ENCODE measurements at regions of chr10 and their contacts with region 1.

Region 1: GRCh38 chr10:132836832-132837540 is 51.0 kb upstream of the NKX6-2 start:
- DNase-seq: peak in 1 of 2 experiments; percentile 53
- H3K4me3 ChIP-seq: no peak overlapping the region
- H3K4me3 Mint-ChIP-seq: no peak overlapping the region
- H3K27ac Mint-ChIP-seq: no peak overlapping the region
- H3K4me1 ChIP-seq: no peaks in the 10 kb centered on the region
- H3K4me1 Mint-ChIP-seq: no peaks in the 10 kb centered on the region
- H3K27me3 ChIP-seq: no peaks in the 10 kb centered on the region; the same call in 1 of the 2 replicates
- H3K27me3 Mint-ChIP-seq: peaks cover 7% of the 10 kb centered on the region
- CTCF ChIP-seq: peak; percentile 92 to 96

Region 2: DNA sequence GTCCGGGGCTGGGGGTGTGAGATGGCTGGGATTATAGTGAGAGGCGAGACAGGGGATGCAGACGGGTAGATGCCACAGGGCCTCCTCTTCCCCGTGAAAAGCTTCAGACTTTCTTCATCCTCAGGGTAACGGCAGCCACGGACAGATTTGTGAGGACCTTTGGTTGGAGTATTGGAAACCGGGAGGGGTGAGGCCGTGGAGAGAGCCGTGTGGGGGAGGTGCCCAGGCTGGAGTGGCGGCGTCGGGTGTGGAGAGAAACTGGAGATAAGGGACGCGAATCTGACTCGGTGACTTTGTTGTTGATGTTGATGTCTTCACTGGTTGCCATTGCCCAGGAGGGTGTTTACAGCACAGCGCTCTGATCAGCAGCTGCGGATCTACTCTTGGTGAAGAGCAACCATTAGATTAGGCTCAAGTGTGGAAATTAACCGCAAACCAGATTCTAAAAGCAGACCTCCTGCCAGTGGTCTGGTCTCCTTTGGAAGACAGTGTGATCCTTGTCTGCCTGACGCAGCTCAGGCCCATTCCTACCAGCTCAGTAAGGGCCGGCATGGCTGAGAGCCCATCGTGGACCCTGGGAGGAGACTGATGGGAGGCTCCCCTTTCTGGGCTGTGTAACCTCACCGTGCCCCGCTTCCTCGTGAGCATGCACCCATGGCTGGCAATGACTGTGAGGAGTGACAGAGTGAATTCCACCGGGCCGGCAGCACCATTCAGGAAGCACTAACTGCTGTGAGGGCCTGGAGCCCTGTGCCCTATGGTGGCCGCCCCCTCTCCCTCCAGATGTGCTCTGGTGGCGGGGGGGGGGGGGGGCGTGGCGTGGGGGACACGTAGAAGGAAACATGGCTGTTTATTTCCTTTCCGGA is 209.1 kb before region 1 on chr10:
- CTCF ChIA-PET with region 1: no interaction called
- POLR2A ChIA-PET with region 1: no interaction called
- intact Hi-C with region 1: no loop called
- DNase-seq: peak in 1 of 2 experiments; percentile 30
- H3K4me3 ChIP-seq: no peak overlapping the region
- H3K4me3 Mint-ChIP-seq: no peak overlapping the region
- H3K27ac Mint-ChIP-seq: no peak overlapping the region
- H3K4me1 ChIP-seq: no peaks in the 10 kb centered on the region
- H3K4me1 Mint-ChIP-seq: no peaks in the 10 kb centered on the region
- H3K27me3 ChIP-seq: no peaks in the 10 kb centered on the region
- H3K27me3 Mint-ChIP-seq: no peaks in the 10 kb centered on the region
- CTCF ChIP-seq: no peak

Region 3: DNA sequence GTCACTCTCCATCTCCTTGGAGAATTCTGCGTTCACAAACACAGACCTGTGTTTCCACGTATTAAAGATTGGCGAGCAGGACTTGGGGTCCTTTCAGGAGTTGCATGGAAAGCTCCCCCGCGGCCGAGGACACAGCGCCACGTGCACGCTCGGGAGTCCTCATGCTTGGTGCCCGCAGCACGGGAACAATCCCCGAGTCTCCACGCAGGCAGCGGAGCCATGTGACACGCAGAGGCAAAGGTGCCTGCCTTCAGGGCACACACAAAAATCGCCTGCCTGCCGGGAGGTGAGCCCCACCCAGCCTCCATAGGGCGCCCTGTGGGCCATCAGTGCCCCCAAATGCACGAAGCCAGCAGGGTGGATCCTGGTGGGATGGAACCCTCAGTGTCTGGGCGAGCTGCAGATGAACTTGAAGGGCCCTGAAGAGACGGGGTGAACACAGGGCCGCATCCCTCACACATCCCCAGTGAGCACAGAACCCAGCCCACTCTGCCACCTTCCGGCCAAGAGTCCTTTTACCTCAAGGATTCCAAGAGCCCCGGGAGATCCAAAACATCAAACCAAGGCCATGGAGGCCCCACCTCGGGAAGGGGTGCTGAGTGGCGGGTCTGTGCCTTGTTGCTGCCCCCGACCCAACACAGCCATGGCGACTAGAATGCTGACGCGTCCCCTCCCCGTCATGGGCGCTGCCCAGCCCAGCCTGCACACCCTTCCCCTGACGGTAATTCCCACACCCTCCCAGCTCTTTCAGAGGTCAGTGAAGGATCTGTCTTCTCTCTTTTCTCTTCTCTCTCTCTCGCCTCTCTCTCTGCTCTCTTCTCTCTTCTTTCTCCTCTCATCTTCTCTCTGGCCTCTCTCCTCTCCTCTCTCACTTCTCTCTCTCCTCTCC is 49.5 kb after region 1 on chr10:
- CTCF ChIA-PET with region 1: no interaction called
- POLR2A ChIA-PET with region 1: no interaction called
- intact Hi-C with region 1: loop called (anchors 1 kb)
- DNase-seq: peak; percentile 27 to 46
- H3K4me3 ChIP-seq: no peak overlapping the region
- H3K4me3 Mint-ChIP-seq: no peak overlapping the region
- H3K27ac Mint-ChIP-seq: no peak overlapping the region
- H3K4me1 ChIP-seq: no peaks in the 10 kb centered on the region
- H3K4me1 Mint-ChIP-seq: no peaks in the 10 kb centered on the region
- H3K27me3 ChIP-seq: no peaks in the 10 kb centered on the region
- H3K27me3 Mint-ChIP-seq: peaks cover 45% of the 10 kb centered on the region
- CTCF ChIP-seq: peak in 1 of 2 experiments; percentile 26